K562 (cell line): ENCODE measurements at regions of chr10 and their contacts with region 1.

Region 1: DNA sequence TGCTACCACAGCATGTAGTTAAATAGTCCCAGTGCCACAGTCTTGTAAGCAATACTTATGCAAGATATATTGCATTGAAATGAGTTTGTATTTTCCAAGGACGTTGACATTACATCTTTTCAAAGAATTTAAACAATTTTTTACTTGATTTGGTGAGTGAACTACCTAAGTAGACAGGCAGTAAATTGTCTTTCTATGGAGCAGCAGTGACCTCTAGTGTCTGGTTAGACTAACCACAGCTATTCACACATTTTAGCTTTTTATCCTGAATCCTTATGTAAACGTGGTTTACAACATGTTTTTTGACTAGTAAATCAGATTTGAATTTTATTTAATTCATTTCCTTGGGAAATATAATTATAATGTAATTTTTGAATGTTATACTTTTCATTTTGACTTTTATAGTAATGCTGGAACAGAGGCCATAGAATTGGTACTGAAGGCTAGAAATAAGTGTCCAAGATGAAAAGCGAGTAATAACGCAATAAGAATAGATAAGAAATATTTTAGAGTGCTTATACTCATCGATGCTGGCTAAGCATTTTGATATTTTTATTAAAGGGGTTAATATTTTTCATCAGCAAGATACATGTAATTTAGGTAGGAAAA is 5.6 kb downstream of the LRRTM3 start:
- DNase-seq: peak; percentile 21 to 68 (median 45)
- ATAC-seq: peak; percentile 75
- H3K4me3 ChIP-seq: no peak overlapping the region
- H3K27ac ChIP-seq: no peak overlapping the region
- H3K4me1 ChIP-seq: no peaks in the 10 kb centered on the region
- H3K27me3 ChIP-seq: no peaks in the 10 kb centered on the region
- CTCF ChIP-seq: peak; percentile 52 to 83 (median 68); a peak in 5 of 6 replicates
- EP300 ChIP-seq: no peak
- POLR2A ChIP-seq: no peak
- RAD21 ChIP-seq: peak; percentile 88 to 92

Region 2: DNA sequence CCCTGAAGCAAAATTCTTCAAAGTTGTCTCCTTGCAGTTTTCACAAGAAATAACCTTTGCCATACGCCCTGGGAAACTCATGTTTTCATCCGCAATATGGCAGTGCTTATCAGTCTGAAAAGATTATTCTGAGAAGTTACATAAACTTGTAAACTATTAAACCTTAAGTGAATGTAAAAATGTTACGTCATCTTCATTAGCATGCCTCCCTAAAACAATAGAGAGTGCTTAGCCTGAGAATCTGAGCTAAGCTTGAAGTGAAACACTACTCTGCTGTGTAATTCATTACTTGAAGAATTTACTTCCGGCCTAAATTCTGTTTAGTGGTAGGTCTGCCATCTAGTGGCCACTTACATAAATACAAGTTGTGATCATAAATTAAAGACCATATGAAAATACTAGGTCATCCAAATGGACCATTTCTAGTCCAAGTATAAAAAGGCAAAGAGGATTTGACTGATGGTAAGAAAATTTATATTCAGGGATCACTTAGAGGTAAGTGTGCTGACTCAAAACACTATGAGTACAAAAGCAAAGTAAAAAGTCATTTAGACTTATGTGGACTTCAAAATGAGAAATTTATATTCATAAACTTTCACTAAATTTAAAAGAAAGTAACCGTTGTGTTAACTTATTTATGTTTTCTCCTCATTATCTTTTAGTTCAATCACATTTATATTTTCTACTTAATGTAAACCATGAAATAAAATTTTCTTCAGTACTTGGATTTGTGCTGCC is 750.7 kb before region 1 on chr10:
- CTCF ChIA-PET with region 1: interaction called, 3 read pairs
- POLR2A ChIA-PET with region 1: no interaction called
- in situ Hi-C with region 1: no loop called
- intact Hi-C with region 1: loop called (anchors 10 kb)
- DNase-seq: peak; percentile 30 to 62 (median 46)
- ATAC-seq: peak; percentile 69; the same call in 2 of the 3 replicates
- H3K4me3 ChIP-seq: no peak overlapping the region
- H3K27ac ChIP-seq: no peak overlapping the region
- H3K4me1 ChIP-seq: no peaks in the 10 kb centered on the region
- H3K27me3 ChIP-seq: no peaks in the 10 kb centered on the region; a peak in 1 of 5 replicates
- CTCF ChIP-seq: peak; percentile 26 to 69 (median 51); a peak in 5 of 6 replicates
- EP300 ChIP-seq: no peak
- POLR2A ChIP-seq: no peak
- RAD21 ChIP-seq: peak; percentile 59 to 72

Region 3: GRCh38 chr10:66860376-66860945 is 71.0 kb before region 1 on chr10:
- CTCF ChIA-PET with region 1: no interaction called
- POLR2A ChIA-PET with region 1: no interaction called
- in situ Hi-C with region 1: no loop called
- intact Hi-C with region 1: no loop called
- DNase-seq: no peak
- ATAC-seq: no peak
- H3K4me3 ChIP-seq: no peak overlapping the region
- H3K27ac ChIP-seq: no peak overlapping the region
- H3K4me1 ChIP-seq: no peaks in the 10 kb centered on the region
- H3K27me3 ChIP-seq: no peaks in the 10 kb centered on the region
- CTCF ChIP-seq: no peak
- EP300 ChIP-seq: no peak
- POLR2A ChIP-seq: no peak
- RAD21 ChIP-seq: no peak

Region 4: DNA sequence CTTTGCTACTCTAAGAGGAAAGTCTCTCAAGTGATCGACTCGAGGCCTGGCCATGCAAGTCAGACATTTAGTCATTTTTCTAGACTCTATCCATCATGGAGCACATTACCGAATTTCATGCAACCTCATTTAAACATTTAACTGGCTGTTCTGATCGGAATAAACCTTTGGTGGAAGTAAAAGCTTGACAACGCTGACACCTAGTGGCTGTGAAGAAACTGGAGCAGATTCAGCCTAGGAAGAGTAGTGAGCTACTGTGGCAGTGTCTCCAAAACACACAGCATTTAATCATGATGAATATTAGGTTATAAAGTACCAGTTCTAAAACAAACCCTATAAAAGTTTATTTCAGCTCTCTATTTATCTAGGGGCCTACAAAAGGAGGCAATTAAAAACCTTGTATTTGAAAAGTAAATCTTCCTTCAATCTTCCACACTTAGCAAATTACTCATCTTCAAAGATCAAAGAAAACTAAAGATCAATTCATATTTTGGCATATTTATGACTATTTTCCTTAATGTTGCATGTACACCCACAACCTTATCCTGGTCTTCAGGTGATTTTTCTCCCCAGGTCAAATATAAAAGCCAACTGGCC is 589.6 kb after region 1 on chr10:
- CTCF ChIA-PET with region 1: no interaction called
- POLR2A ChIA-PET with region 1: no interaction called
- in situ Hi-C with region 1: no loop called
- intact Hi-C with region 1: loop called (anchors 10 kb)
- DNase-seq: peak; percentile 17 to 45 (median 21)
- ATAC-seq: peak; percentile 75
- H3K4me3 ChIP-seq: no peak overlapping the region
- H3K27ac ChIP-seq: no peak overlapping the region
- H3K4me1 ChIP-seq: no peaks in the 10 kb centered on the region
- H3K27me3 ChIP-seq: no peaks in the 10 kb centered on the region
- CTCF ChIP-seq: peak; percentile 39 to 67 (median 56); a peak in 5 of 6 replicates
- EP300 ChIP-seq: no peak
- POLR2A ChIP-seq: no peak
- RAD21 ChIP-seq: peak; percentile 75 to 82